Activated CD4-positive, alpha-beta T cell treated with anti-CD3 and anti-CD28 coated beads, Interleukin-2, amount 10 ng/mL, durations not matched to agents 7 days and 5 days (primary cell): ENCODE measurements at regions of chr2 and their contacts with region 1.

Region 1: GRCh38 chr2:47767880-47768609 is 14.9 kb upstream of the MSH6 start:
- DNase-seq: peak; percentile 62
- H3K4me3 Mint-ChIP-seq: no peak overlapping the region
- H3K27ac Mint-ChIP-seq: no peak overlapping the region
- H3K4me1 Mint-ChIP-seq: peaks cover 11% of the 10 kb centered on the region
- H3K27me3 Mint-ChIP-seq: peaks cover 3% of the 10 kb centered on the region

Region 2: GRCh38 chr2:47336259-47337238 is 431.5 kb before region 1 on chr2:
- CTCF ChIA-PET with region 1: interaction called, 13 read pairs
- POLR2A ChIA-PET with region 1: no interaction called
- DNase-seq: no peak
- H3K4me3 Mint-ChIP-seq: no peak overlapping the region
- H3K27ac Mint-ChIP-seq: no peak overlapping the region
- H3K4me1 Mint-ChIP-seq: no peaks in the 10 kb centered on the region
- H3K27me3 Mint-ChIP-seq: peaks cover 3% of the 10 kb centered on the region

Region 3: DNA sequence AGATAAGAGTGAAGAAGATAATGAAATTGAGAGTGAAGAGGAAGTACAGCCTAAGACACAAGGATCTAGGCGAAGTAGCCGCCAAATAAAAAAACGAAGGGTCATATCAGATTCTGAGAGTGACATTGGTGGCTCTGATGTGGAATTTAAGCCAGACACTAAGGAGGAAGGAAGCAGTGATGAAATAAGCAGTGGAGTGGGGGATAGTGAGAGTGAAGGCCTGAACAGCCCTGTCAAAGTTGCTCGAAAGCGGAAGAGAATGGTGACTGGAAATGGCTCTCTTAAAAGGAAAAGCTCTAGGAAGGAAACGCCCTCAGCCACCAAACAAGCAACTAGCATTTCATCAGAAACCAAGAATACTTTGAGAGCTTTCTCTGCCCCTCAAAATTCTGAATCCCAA is 30.6 kb after region 1 on chr2:
- CTCF ChIA-PET with region 1: no interaction called
- POLR2A ChIA-PET with region 1: no interaction called
- DNase-seq: no peak
- H3K4me3 Mint-ChIP-seq: no peak overlapping the region
- H3K27ac Mint-ChIP-seq: no peak overlapping the region
- H3K4me1 Mint-ChIP-seq: peaks cover 1% of the 10 kb centered on the region
- H3K27me3 Mint-ChIP-seq: no peaks in the 10 kb centered on the region